OCI-LY7 (cell line): ENCODE measurements at regions of chr1 and their contacts with region 1.

Region 1: GRCh38 chr1:79519084-79519760 is 512.7 kb upstream of the ADGRL4 start:
- DNase-seq: peak; percentile 91
- H3K4me3 ChIP-seq: peak overlapping the region; percentile 33
- H3K27ac ChIP-seq: peak overlapping the region; percentile 97
- H3K4me1 ChIP-seq: peaks cover 42% of the 10 kb centered on the region
- CTCF ChIP-seq: no peak

Region 2: GRCh38 chr1:78038491-78038939 is 1480.7 kb before region 1 on chr1:
- CTCF ChIA-PET with region 1: no interaction called
- POLR2A ChIA-PET with region 1: no interaction called
- intact Hi-C with region 1: no loop called
- DNase-seq: no peak
- H3K4me3 ChIP-seq: no peak overlapping the region
- H3K27ac ChIP-seq: no peak overlapping the region
- H3K4me1 ChIP-seq: no peaks in the 10 kb centered on the region
- CTCF ChIP-seq: no peak

Region 3: GRCh38 chr1:79472067-79472656 is 47.1 kb before region 1 on chr1:
- CTCF ChIA-PET with region 1: no interaction called
- POLR2A ChIA-PET with region 1: interaction called, 3 read pairs
- intact Hi-C with region 1: loop called (anchors 2 kb)
- DNase-seq: peak; percentile 44
- H3K4me3 ChIP-seq: no peak overlapping the region
- H3K27ac ChIP-seq: peak overlapping the region; percentile 34
- H3K4me1 ChIP-seq: peaks cover 14% of the 10 kb centered on the region
- CTCF ChIP-seq: no peak

Region 4: DNA sequence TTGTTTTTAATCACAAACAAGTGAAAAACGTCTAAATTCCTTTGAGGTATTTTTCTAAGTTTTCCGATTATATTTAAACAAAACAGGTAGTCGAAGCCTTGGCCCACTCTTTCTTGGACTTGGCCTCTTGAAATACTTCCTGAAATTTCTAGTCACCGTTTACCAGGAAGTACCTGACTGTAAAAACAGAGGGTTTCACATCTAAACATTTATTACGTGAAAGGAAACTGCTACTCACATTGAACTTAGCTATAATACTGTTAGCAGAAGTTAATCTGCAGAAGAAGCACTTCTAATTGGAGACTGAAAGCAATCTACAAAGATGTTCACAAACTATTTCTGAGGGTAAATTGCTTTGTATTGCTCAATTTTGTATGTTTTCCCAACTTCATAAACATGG is 13.3 kb after region 1 on chr1:
- CTCF ChIA-PET with region 1: no interaction called
- POLR2A ChIA-PET with region 1: interaction called, 13 read pairs
- intact Hi-C with region 1: no loop called
- DNase-seq: peak; percentile 44
- H3K4me3 ChIP-seq: no peak overlapping the region
- H3K27ac ChIP-seq: peak overlapping the region; percentile 33
- H3K4me1 ChIP-seq: peaks cover 18% of the 10 kb centered on the region
- CTCF ChIP-seq: no peak